ENCODE measurements at regions of chr17 and their contacts with region 1.

Region 1: GRCh38 chr17:49556223-49556971 is 19.3 kb upstream of the NXPH3 start:
- DNase-seq: peak; percentile 94
- H3K4me3 ChIP-seq: peak overlapping the region in 1 of 8 donors; percentile 36
- H3K27ac ChIP-seq: no peak overlapping the region
- H3K4me1 ChIP-seq: peaks cover 5 to 15% (median 8%) of the 10 kb centered on the region in 6 donors
- H3K27me3 ChIP-seq: peaks cover 0 to 22% (median 0%) of the 10 kb centered on the region in 7 donors
- CTCF ChIP-seq: peak; percentile 82 to 98 (median 96)
- POLR2A ChIP-seq: no peak

Region 2: GRCh38 chr17:49414622-49415350 is 141.6 kb before region 1 on chr17 and contains the start of gene PHB1:
- intact Hi-C with region 1: loop called (anchors 5 kb)
- DNase-seq: peak; percentile 97
- H3K4me3 ChIP-seq: peak within 1 kb of the TSS; percentile 66 to 92 (median 84)
- H3K27ac ChIP-seq: peak within 1 kb of the TSS in 6 of 8 donors; percentile 51 to 81 (median 66)
- H3K4me1 ChIP-seq: peaks cover 6 to 34% (median 23%) of the 10 kb centered on the region in 6 donors
- H3K27me3 ChIP-seq: no peaks in the 10 kb centered on the region
- CTCF ChIP-seq: peak in 2 of 11 experiments; percentile 17 to 28
- POLR2A ChIP-seq: no peak
- total RNA-seq, gene PHB1: 49.4 to 84.1 (median 66.6) TPM

Region 3: GRCh38 chr17:49434821-49435670 is 121.4 kb before region 1 on chr17:
- intact Hi-C with region 1: loop called (anchors 5 kb)
- DNase-seq: no peak
- H3K4me3 ChIP-seq: no peak overlapping the region
- H3K27ac ChIP-seq: no peak overlapping the region
- H3K4me1 ChIP-seq: peaks cover 0 to 16% (median 8%) of the 10 kb centered on the region in 6 donors
- H3K27me3 ChIP-seq: peaks cover 0 to 29% (median 10%) of the 10 kb centered on the region in 7 donors
- CTCF ChIP-seq: peak in 10 of 11 experiments; percentile 17 to 80 (median 66)
- POLR2A ChIP-seq: no peak

Region 4: DNA sequence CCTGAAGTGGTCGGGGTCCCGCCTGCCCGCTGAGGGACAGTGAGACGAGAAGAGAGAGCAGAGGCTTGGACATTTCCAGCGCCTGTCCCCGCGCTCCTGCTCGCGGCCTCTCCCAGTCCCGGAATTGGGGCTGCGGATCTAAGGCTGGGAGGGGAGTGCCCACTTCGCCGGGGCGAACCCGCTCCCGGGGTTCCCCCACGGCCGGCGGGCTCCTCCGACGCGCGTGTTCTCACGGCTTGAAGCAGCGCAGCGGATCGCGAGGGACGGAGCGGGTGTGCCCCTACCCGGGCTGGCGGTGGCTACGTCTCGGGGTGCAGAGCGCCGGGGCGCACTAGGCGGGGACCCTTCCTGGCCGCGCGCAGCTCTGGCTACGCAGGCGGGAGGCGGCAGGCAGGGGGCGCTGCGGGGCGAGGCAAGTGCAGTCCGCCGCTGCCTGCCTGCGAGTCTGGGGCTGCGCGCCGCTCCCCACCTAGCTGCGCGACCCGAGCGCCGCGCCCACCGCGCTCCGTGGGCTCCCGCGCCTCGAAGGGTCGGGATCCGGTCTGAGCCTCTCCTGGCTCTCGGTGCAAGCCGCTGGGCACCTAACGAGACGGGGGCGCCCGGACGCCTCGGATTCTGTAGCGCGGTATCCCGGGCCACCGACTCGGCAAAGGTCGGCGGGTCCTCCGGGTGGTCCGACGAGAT is 60.1 kb before region 1 on chr17:
- intact Hi-C with region 1: loop called (anchors 10 kb)
- DNase-seq: peak; percentile 95
- H3K4me3 ChIP-seq: peak overlapping the region; percentile 41 to 81 (median 57)
- H3K27ac ChIP-seq: peak overlapping the region in 6 of 8 donors; percentile 0 to 59 (median 38)
- H3K4me1 ChIP-seq: peaks cover 24 to 47% (median 38%) of the 10 kb centered on the region in 6 donors
- H3K27me3 ChIP-seq: peaks cover 6 to 74% (median 67%) of the 10 kb centered on the region in 7 donors
- CTCF ChIP-seq: peak; percentile 41 to 96 (median 94)
- POLR2A ChIP-seq: no peak

Region 5: GRCh38 chr17:49624896-49625295 is 68.5 kb after region 1 on chr17:
- intact Hi-C with region 1: no loop called
- DNase-seq: no peak
- H3K4me3 ChIP-seq: no peak overlapping the region
- H3K27ac ChIP-seq: no peak overlapping the region
- H3K4me1 ChIP-seq: peaks cover 0 to 32% (median 13%) of the 10 kb centered on the region in 6 donors
- H3K27me3 ChIP-seq: no peaks in the 10 kb centered on the region
- CTCF ChIP-seq: no peak
- POLR2A ChIP-seq: no peak